CD4-positive, alpha-beta T cell (primary cell): ENCODE measurements at regions of chr3 and their contacts with region 1.

Region 1: DNA sequence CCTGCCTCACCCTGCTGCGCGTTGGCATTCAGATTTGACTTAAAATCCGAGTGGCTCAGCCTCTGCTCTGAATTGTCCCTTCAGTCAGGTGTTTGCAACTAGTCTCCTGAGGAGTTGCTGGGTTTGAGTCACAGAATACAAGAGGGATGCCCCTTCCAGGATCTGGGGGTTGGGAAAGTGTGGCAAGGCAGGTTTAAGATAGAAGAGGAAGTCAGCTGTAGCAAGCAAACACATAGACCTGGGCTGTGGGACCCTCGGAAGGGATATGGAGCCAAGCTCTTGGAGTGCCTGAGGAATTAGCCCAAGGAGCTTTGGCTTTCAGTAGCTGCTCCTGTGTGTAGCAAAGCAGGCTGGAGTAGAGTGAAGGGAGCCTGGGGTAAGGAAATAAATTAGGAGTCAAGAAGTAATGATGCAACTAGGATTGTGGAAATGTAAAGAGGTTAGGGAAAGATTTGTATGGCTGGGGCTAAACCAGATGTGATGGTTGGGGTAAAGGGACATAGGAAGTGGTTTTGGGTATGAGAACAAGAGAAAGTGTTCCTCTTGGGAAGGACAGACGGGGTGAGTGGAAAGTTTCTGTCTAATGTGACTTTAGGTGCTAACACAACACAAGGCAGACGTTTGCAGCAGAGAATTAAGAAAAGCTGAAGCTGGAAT is 41.2 kb downstream of the RAB7A start:
- DNase-seq: no peak
- ATAC-seq: no peak
- H3K4me3 ChIP-seq: no peak overlapping the region
- H3K4me3 Mint-ChIP-seq: peak overlapping the region; percentile 17
- H3K27ac ChIP-seq: no peak overlapping the region
- H3K27ac Mint-ChIP-seq: peak overlapping the region; percentile 5
- H3K4me1 ChIP-seq: peaks cover 28% of the 10 kb centered on the region
- H3K4me1 Mint-ChIP-seq: peaks cover 93% of the 10 kb centered on the region
- H3K27me3 ChIP-seq: no peaks in the 10 kb centered on the region
- H3K27me3 Mint-ChIP-seq: no peaks in the 10 kb centered on the region
- CTCF ChIP-seq: no peak

Region 2: DNA sequence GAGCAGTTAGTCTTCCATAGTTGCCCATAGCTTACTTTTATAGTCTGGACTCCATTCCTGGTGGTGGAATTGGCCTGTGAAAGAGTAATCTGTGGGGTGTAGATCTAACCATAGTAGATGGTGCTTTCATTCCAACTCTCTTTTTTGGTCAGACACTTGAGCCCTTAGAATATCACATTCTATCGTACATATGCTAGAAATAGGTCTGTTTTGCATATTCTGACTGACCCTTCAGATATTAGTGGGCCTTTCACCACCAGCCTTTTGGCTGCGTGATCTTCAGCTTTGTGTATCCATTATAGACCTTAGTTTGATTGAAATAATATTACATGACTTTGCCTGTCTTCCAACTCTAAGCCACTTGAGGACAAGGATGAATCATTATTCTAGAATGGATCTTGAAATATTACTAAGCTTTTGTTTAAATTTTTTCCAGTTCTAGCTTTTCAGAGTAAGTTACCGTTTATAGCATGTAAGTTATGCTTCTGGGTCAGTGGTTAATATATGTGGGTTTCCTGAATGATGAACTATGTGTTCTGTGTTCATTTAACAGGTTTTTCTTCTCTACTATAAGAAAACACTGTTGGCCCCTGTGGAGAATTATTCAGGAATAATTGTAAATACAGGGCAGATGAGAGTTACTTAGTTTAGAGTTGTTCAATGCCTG is 32.6 kb before region 1 on chr3:
- CTCF ChIA-PET with region 1: no interaction called
- POLR2A ChIA-PET with region 1: no interaction called
- intact Hi-C with region 1: loop called in 1 of 2 experiments (anchors 5 kb)
- DNase-seq: no peak
- ATAC-seq: no peak
- H3K4me3 ChIP-seq: no peak overlapping the region
- H3K4me3 Mint-ChIP-seq: peak overlapping the region; percentile 13
- H3K27ac ChIP-seq: no peak overlapping the region
- H3K27ac Mint-ChIP-seq: peak overlapping the region; percentile 47
- H3K4me1 ChIP-seq: peaks cover 46% of the 10 kb centered on the region
- H3K4me1 Mint-ChIP-seq: peaks cover 74% of the 10 kb centered on the region
- H3K27me3 ChIP-seq: no peaks in the 10 kb centered on the region
- H3K27me3 Mint-ChIP-seq: no peaks in the 10 kb centered on the region
- CTCF ChIP-seq: no peak

Region 3: DNA sequence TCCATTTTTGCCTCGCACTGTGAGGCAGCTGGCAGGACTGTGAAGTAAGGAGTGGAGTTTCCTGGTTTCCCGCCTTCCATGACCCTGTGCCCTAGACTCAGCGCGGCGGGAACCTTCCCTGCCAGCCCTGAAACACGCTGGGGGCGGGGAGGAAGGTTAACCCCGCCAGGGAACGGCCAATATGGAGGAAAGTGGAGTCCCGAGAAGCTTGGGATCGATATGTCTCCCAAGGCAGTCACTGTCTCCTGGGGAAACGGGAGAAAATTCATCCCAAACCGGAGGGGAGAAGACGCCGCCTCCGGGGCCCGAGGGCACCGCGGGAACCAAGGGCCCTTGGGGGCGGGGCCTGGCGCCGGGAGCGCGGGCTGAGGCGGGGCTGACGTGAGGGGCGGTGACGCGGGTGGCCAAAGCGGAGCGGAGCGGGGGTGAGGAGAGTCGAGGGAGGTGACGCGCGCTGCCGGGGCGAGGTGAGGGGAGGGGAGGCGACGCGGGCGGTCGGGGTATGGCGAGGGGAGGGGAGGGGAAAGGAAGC is 511.3 kb after region 1 on chr3 and contains the start of gene HMCES:
- CTCF ChIA-PET with region 1: no interaction called
- POLR2A ChIA-PET with region 1: no interaction called
- intact Hi-C with region 1: no loop called
- DNase-seq: peak; percentile 91 to 98 (median 95)
- ATAC-seq: peak; percentile 92
- H3K4me3 ChIP-seq: peak within 1 kb of the TSS; percentile 79
- H3K4me3 Mint-ChIP-seq: peak within 1 kb of the TSS; percentile 97
- H3K27ac ChIP-seq: peak within 1 kb of the TSS; percentile 90 to 93
- H3K27ac Mint-ChIP-seq: peak within 1 kb of the TSS; percentile 95
- H3K4me1 ChIP-seq: peaks cover 45% of the 10 kb centered on the region
- H3K4me1 Mint-ChIP-seq: peaks cover 43% of the 10 kb centered on the region
- H3K27me3 ChIP-seq: no peaks in the 10 kb centered on the region
- H3K27me3 Mint-ChIP-seq: no peaks in the 10 kb centered on the region
- CTCF ChIP-seq: no peak
- total RNA-seq, gene HMCES: 63.5 to 64.0 TPM